CD8-positive, alpha-beta T cell (primary cell): ENCODE measurements at regions of chr9 and their contacts with region 1.

Region 1: DNA sequence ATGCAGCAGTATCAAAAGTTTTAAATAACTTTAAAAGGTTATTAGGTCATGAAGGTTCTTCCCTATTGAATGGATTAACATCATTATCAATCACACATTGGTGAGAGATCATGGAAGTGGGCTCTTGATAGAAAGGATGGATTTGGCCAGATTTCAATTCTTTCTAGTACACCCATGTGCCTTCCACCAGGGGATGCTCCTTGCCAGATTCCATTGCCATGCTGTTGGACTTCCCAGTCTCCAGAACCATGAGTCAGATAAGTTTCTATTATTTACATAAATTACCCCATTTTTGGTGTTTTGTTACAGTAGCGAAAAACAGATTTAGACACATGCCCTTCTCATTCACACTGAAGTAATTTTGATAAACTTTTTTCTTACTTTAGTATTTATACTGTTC is 1010.6 kb upstream of the C9orf72 start:
- DNase-seq: no peak
- ATAC-seq: no peak
- H3K4me3 ChIP-seq: no peak overlapping the region
- H3K4me3 Mint-ChIP-seq: no peak overlapping the region
- H3K27ac ChIP-seq: no peak overlapping the region
- H3K27ac Mint-ChIP-seq: no peak overlapping the region
- H3K4me1 ChIP-seq: no peaks in the 10 kb centered on the region
- H3K4me1 Mint-ChIP-seq: no peaks in the 10 kb centered on the region
- H3K27me3 ChIP-seq: no peaks in the 10 kb centered on the region
- H3K27me3 Mint-ChIP-seq: no peaks in the 10 kb centered on the region
- CTCF ChIP-seq: no peak

Region 2: DNA sequence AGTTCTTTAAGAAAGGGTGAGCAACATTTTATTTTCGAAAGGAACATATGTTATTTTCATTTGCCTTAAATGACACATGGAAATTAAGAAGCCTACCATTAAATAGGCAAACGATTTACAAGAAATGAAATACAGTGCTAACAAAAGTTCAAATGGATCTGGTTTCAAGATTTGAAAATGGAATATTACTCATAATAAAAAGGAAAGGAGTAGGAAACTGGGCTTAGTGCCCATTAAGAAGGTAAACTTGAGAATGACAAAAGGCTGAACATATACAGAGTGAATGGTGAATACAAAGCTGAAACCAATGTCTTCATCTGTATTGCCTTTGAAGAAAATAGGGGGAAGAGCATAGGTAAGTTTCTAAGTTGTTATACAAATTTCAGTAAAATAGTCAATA is 36.3 kb before region 1 on chr9:
- CTCF ChIA-PET with region 1: no interaction called
- POLR2A ChIA-PET with region 1: no interaction called
- intact Hi-C with region 1: loop called in 1 of 2 experiments (anchors 5 kb)
- DNase-seq: no peak
- ATAC-seq: no peak
- H3K4me3 ChIP-seq: no peak overlapping the region
- H3K4me3 Mint-ChIP-seq: no peak overlapping the region
- H3K27ac ChIP-seq: no peak overlapping the region
- H3K27ac Mint-ChIP-seq: no peak overlapping the region
- H3K4me1 ChIP-seq: no peaks in the 10 kb centered on the region
- H3K4me1 Mint-ChIP-seq: no peaks in the 10 kb centered on the region
- H3K27me3 ChIP-seq: no peaks in the 10 kb centered on the region
- H3K27me3 Mint-ChIP-seq: no peaks in the 10 kb centered on the region
- CTCF ChIP-seq: no peak